Spleen (tissue), 13 donors: ENCODE measurements at regions of chr1 and their contacts with region 1.

Region 1: DNA sequence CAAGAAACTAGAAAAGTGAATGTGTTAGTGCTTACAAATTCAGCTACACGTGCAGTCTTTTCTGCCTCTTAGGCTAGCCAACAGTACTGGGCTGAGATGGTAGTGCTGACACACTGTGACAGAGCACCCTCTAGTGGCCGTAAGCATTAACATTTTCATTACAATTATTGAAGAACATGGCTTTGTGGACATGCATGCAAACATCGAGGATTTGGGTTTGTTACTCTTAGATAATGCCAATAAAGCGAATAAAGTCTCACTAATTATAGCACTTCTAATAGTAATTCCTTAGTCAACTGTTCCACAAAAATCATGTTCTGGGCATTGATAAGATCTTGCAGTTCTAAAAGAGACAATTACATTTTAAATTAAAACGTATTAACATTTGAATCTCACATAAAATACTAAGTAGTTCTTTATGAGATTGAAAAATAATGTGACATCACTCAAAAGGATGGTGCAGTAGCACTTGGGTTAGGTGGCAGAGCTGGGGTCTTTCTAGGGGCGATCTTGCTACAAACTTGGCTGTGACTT is 47.1 kb downstream of the MYSM1 start:
- DNase-seq: no peak
- H3K4me3 ChIP-seq: no peak overlapping the region
- H3K27ac ChIP-seq: no peak overlapping the region
- H3K4me1 ChIP-seq: peaks cover 0 to 19% (median 0%) of the 10 kb centered on the region in 6 donors
- H3K27me3 ChIP-seq: no peaks in the 10 kb centered on the region
- CTCF ChIP-seq: peak; percentile 44 to 79 (median 74)
- POLR2A ChIP-seq: no peak

Region 2: GRCh38 chr1:58513956-58514355 is 138.8 kb before region 1 on chr1:
- intact Hi-C with region 1: loop called (anchors 5 kb)
- DNase-seq: no peak
- H3K4me3 ChIP-seq: no peak overlapping the region
- H3K27ac ChIP-seq: no peak overlapping the region
- H3K4me1 ChIP-seq: peaks cover 0 to 18% (median 7%) of the 10 kb centered on the region in 6 donors
- H3K27me3 ChIP-seq: no peaks in the 10 kb centered on the region
- CTCF ChIP-seq: no peak
- POLR2A ChIP-seq: no peak